ENCODE measurements at regions of chr14 and their contacts with region 1.

Region 1: GRCh38 chr14:50714450-50715073 is 46.5 kb upstream of the SAV1 start:
- DNase-seq: peak; percentile 52
- H3K4me3 ChIP-seq: no peak overlapping the region
- H3K27ac ChIP-seq: no peak overlapping the region
- H3K4me1 ChIP-seq: no peaks in the 10 kb centered on the region
- CTCF ChIP-seq: peak; percentile 84

Region 2: GRCh38 chr14:50542941-50543418 is 171.6 kb before region 1 on chr14:
- CTCF ChIA-PET with region 1: no interaction called
- POLR2A ChIA-PET with region 1: interaction called, 3 read pairs
- intact Hi-C with region 1: loop called (anchors 10 kb)
- DNase-seq: peak; percentile 70
- H3K4me3 ChIP-seq: no peak overlapping the region
- H3K27ac ChIP-seq: no peak overlapping the region
- H3K4me1 ChIP-seq: no peaks in the 10 kb centered on the region
- CTCF ChIP-seq: peak; percentile 79

Measured in OCI-LY7 (cell line).